GM12878 (cell line): ENCODE measurements at regions of chr17 and their contacts with region 1.

Region 1: GRCh38 chr17:57243171-57243948 is 13.0 kb upstream of the MSI2 start:
- DNase-seq: peak; percentile 50
- ATAC-seq: peak; percentile 93
- H3K4me3 ChIP-seq: no peak overlapping the region
- H3K27ac ChIP-seq: no peak overlapping the region
- H3K4me1 ChIP-seq: no peaks in the 10 kb centered on the region
- H3K27me3 ChIP-seq: no peaks in the 10 kb centered on the region
- CTCF ChIP-seq: peak; percentile 100; a peak in 5 of 6 replicates
- EP300 ChIP-seq: no peak
- POLR2A ChIP-seq: no peak
- RAD21 ChIP-seq: peak; percentile 97

Region 2: DNA sequence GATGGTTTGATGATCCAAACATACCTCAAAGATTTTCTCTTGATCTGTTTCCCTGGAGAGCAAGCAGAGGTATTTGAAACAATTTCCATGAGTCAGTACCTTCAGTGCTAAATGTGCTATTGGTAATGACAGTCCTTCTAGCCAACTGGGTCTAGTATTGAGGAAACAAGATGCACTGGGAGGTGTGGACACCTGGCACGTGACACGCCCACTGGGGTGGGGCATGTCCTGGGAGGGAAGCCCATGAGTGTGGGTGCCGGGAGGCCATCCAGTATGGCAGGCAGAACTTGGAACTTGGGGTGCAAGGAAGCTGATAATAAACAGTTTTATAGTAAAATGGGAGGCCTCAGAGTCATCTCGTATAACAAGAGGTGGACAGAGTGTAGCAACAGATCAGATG is 176.2 kb before region 1 on chr17:
- CTCF ChIA-PET with region 1: no interaction called
- POLR2A ChIA-PET with region 1: no interaction called
- RAD21 ChIA-PET with region 1: no interaction called
- SMC1A ChIA-PET with region 1: no interaction called
- in situ Hi-C with region 1: no loop called
- intact Hi-C with region 1: no loop called
- DNase-seq: no peak
- ATAC-seq: no peak
- H3K4me3 ChIP-seq: no peak overlapping the region
- H3K27ac ChIP-seq: no peak overlapping the region
- H3K4me1 ChIP-seq: no peaks in the 10 kb centered on the region
- H3K27me3 ChIP-seq: no peaks in the 10 kb centered on the region
- CTCF ChIP-seq: no peak
- EP300 ChIP-seq: no peak
- POLR2A ChIP-seq: no peak
- RAD21 ChIP-seq: no peak

Region 3: GRCh38 chr17:57186226-57187019 is 56.9 kb before region 1 on chr17:
- CTCF ChIA-PET with region 1: no interaction called
- POLR2A ChIA-PET with region 1: no interaction called
- RAD21 ChIA-PET with region 1: no interaction called
- SMC1A ChIA-PET with region 1: no interaction called
- in situ Hi-C with region 1: no loop called
- intact Hi-C with region 1: no loop called
- DNase-seq: no peak
- ATAC-seq: no peak
- H3K4me3 ChIP-seq: no peak overlapping the region
- H3K27ac ChIP-seq: no peak overlapping the region
- H3K4me1 ChIP-seq: peaks cover 4% of the 10 kb centered on the region
- H3K27me3 ChIP-seq: no peaks in the 10 kb centered on the region
- CTCF ChIP-seq: no peak
- EP300 ChIP-seq: no peak
- POLR2A ChIP-seq: no peak
- RAD21 ChIP-seq: no peak

Region 4: GRCh38 chr17:57207411-57207810 is 35.9 kb before region 1 on chr17:
- CTCF ChIA-PET with region 1: interaction called, 11 read pairs
- POLR2A ChIA-PET with region 1: interaction called, 3 read pairs
- RAD21 ChIA-PET with region 1: no interaction called
- SMC1A ChIA-PET with region 1: interaction called, 4 read pairs
- in situ Hi-C with region 1: no loop called
- intact Hi-C with region 1: no loop called
- DNase-seq: no peak
- ATAC-seq: no peak
- H3K4me3 ChIP-seq: no peak overlapping the region
- H3K27ac ChIP-seq: no peak overlapping the region
- H3K4me1 ChIP-seq: no peaks in the 10 kb centered on the region
- H3K27me3 ChIP-seq: no peaks in the 10 kb centered on the region; a peak in 1 of 4 replicates
- CTCF ChIP-seq: no peak
- EP300 ChIP-seq: no peak
- POLR2A ChIP-seq: no peak
- RAD21 ChIP-seq: no peak

Region 5: GRCh38 chr17:57338257-57338914 is 95.0 kb after region 1 on chr17:
- CTCF ChIA-PET with region 1: interaction called, 9 read pairs
- POLR2A ChIA-PET with region 1: no interaction called
- RAD21 ChIA-PET with region 1: interaction called, 10 read pairs
- SMC1A ChIA-PET with region 1: interaction called, 8 read pairs
- in situ Hi-C with region 1: no loop called
- intact Hi-C with region 1: no loop called
- DNase-seq: peak; percentile 64
- ATAC-seq: peak; percentile 92
- H3K4me3 ChIP-seq: peak overlapping the region; percentile 20; the same call in 1 of the 2 replicates
- H3K27ac ChIP-seq: peak overlapping the region; percentile 64
- H3K4me1 ChIP-seq: peaks cover 29% of the 10 kb centered on the region
- H3K27me3 ChIP-seq: no peaks in the 10 kb centered on the region
- CTCF ChIP-seq: no peak
- EP300 ChIP-seq: peak; percentile 61 to 73; a peak in 3 of 4 replicates
- POLR2A ChIP-seq: no peak
- RAD21 ChIP-seq: 0 out of 2 replicates have a peak, but pooled peaks have one; percentile 5

Region 6: GRCh38 chr17:57422574-57423164 is 179.3 kb after region 1 on chr17:
- CTCF ChIA-PET with region 1: interaction called, 9 read pairs
- POLR2A ChIA-PET with region 1: no interaction called
- RAD21 ChIA-PET with region 1: interaction called, 4 read pairs
- SMC1A ChIA-PET with region 1: interaction called, 10 read pairs
- in situ Hi-C with region 1: no loop called
- intact Hi-C with region 1: no loop called
- DNase-seq: peak; percentile 77
- ATAC-seq: peak; percentile 95
- H3K4me3 ChIP-seq: no peak overlapping the region
- H3K27ac ChIP-seq: peak overlapping the region; percentile 59
- H3K4me1 ChIP-seq: peaks cover 69% of the 10 kb centered on the region
- H3K27me3 ChIP-seq: no peaks in the 10 kb centered on the region
- CTCF ChIP-seq: no peak
- EP300 ChIP-seq: peak in 1 of 2 experiments; percentile 26; a peak in 2 of 4 replicates
- POLR2A ChIP-seq: no peak
- RAD21 ChIP-seq: peak; percentile 14; the same call in 1 of the 2 replicates

Region 7: GRCh38 chr17:57468932-57469775 is 225.8 kb after region 1 on chr17:
- CTCF ChIA-PET with region 1: interaction called, 12 read pairs
- POLR2A ChIA-PET with region 1: no interaction called
- RAD21 ChIA-PET with region 1: interaction called, 5 read pairs
- SMC1A ChIA-PET with region 1: interaction called, 4 read pairs
- in situ Hi-C with region 1: no loop called
- intact Hi-C with region 1: no loop called
- DNase-seq: peak; percentile 68
- ATAC-seq: peak; percentile 74
- H3K4me3 ChIP-seq: no peak overlapping the region
- H3K27ac ChIP-seq: peak overlapping the region; percentile 93
- H3K4me1 ChIP-seq: peaks cover 56% of the 10 kb centered on the region
- H3K27me3 ChIP-seq: no peaks in the 10 kb centered on the region
- CTCF ChIP-seq: no peak
- EP300 ChIP-seq: peak; percentile 57 to 84; a peak in 3 of 4 replicates
- POLR2A ChIP-seq: no peak
- RAD21 ChIP-seq: no peak

Region 8: GRCh38 chr17:57622683-57623433 is 379.5 kb after region 1 on chr17:
- CTCF ChIA-PET with region 1: interaction called, 8 read pairs
- POLR2A ChIA-PET with region 1: no interaction called
- RAD21 ChIA-PET with region 1: interaction called, 10 read pairs
- SMC1A ChIA-PET with region 1: interaction called, 6 read pairs
- in situ Hi-C with region 1: no loop called
- intact Hi-C with region 1: no loop called
- DNase-seq: peak; percentile 34
- ATAC-seq: peak; percentile 96
- H3K4me3 ChIP-seq: peak overlapping the region; percentile 43
- H3K27ac ChIP-seq: peak overlapping the region; percentile 72
- H3K4me1 ChIP-seq: peaks cover 32% of the 10 kb centered on the region
- H3K27me3 ChIP-seq: no peaks in the 10 kb centered on the region
- CTCF ChIP-seq: no peak
- EP300 ChIP-seq: 0 out of 4 replicates have a peak, but pooled peaks of 1 of the 2 experiments have one; percentile 27
- POLR2A ChIP-seq: no peak
- RAD21 ChIP-seq: no peak